ENCODE measurements at regions of chr2 and their contacts with region 1.

Region 1: DNA sequence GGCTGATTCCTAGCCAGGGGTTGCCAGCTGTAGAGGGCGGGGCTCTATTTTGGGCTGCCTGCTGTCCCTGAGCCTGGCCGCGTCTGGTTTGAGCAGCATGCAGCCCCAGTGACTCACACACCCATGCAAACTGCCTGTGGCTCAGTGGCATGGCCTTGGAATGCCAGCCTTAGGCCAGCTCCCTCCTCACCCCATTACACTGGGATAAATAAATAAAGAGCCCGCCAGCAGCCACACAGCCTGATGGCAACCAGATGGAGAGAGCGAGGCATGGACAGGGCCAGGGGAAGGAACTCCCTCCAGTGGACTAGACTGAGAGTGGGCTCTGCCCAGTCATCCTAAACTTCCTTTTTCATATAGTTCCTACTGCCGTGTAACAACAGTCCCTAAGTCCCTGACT is 18.3 kb downstream of the NHEJ1 start:
- DNase-seq: peak; percentile 46
- H3K4me3 ChIP-seq: no peak overlapping the region
- CTCF ChIP-seq: peak; percentile 51

Region 2: GRCh38 chr2:219111375-219112061 is 30.8 kb before region 1 on chr2:
- CTCF ChIA-PET with region 1: no interaction called
- POLR2A ChIA-PET with region 1: no interaction called
- DNase-seq: no peak
- H3K4me3 ChIP-seq: no peak overlapping the region
- CTCF ChIP-seq: no peak

Region 3: DNA sequence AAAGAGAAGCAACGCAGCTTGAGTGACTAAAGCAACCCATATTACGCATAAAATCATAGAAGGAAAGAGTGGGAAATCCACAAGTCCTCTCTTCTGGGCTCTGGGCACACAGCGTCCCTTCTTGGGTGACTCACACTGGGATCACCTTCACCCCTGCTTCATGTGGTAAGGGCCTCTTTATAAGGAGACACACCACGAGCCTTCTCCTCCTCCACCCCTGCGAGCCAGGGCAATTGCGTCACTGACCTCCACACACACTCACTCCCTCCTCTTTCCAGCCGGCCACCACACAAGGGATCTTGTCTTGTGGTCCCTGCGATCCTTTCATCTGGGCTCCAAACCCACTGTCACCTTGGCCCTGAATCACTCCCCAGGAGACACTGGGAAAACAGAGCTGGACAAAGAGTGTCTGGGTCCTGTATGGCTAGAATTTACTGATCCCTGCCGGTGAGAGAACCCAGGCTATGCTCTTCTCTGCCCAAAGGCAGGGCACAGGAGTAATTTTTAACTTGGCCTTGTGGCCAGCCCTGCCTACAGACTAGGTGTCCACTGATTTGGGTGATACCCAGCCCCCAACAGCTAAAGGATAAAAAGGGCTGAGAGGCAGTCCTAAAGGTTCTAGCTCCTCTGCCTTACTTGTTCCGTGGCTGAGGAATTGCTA is 17.0 kb before region 1 on chr2:
- CTCF ChIA-PET with region 1: interaction called, 19 read pairs
- POLR2A ChIA-PET with region 1: no interaction called
- DNase-seq: no peak
- H3K4me3 ChIP-seq: no peak overlapping the region
- CTCF ChIP-seq: no peak

Measured in AG04449 (cell line).